ENCODE measurements at regions of chr3 and their contacts with region 1.

Region 1: GRCh38 chr3:188554404-188554803 is 400.4 kb downstream of the LPP start:
- DNase-seq: no peak
- ATAC-seq: peak in 1 of 3 donors; percentile 13
- H3K4me3 ChIP-seq: no peak overlapping the region
- H3K4me3 Mint-ChIP-seq: no peak overlapping the region
- H3K27ac ChIP-seq: peak overlapping the region; percentile 79
- H3K27ac Mint-ChIP-seq: no peak overlapping the region
- H3K4me1 ChIP-seq: peaks cover 23% of the 10 kb centered on the region
- H3K4me1 Mint-ChIP-seq: peaks cover 0 to 26% of the 10 kb centered on the region in 2 donors
- H3K27me3 ChIP-seq: no peaks in the 10 kb centered on the region
- H3K27me3 Mint-ChIP-seq: no peaks in the 10 kb centered on the region
- CTCF ChIP-seq: no peak

Region 2: DNA sequence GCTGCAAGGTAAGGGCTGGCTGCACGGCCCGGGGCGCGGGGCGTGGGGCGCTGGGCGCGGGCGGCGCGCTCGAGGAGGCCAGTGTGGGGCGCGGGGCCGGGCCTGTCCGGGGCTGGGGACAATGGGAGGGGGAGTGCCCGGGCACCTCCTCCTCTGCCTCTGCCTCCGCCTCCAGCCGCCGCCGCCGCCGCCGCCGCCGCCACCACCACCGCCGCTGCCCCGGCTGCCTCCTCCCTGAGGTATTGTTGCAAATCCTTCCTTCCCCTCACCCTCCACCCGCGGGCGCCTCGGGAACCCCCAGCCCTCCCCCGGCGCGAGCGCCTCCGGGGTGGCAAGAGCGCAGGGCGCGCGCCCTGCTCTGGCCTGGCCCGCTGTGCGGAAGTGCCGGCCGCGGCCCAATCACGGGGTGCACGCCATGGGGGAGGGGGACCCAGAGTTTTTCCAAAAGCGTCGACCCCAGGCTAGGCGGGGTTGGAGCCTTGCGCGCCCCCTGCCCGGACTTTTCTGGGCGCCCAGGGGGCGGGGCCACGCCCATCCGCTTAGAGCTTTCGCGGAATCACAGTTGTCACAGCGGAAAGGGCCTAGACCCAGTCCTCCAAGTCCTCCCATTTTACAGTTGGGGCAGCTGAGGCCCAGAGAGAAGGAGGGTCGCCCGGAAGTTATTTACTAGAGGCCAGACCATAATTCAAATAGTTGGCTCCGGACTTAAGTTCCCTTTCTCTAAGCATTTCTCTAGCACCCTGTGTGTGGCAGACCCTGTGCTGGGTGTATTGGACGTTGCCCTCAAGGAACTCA is 400.2 kb before region 1 on chr3 and contains the start of gene LPP:
- intact Hi-C with region 1: loop called (anchors 5 kb)
- DNase-seq: peak; percentile 89 to 91
- ATAC-seq: peak; percentile 85 to 94 (median 92)
- H3K4me3 ChIP-seq: peak within 1 kb of the TSS; percentile 95
- H3K4me3 Mint-ChIP-seq: peak within 1 kb of the TSS; percentile 96
- H3K27ac ChIP-seq: peak within 1 kb of the TSS; percentile 90
- H3K27ac Mint-ChIP-seq: peak within 1 kb of the TSS; percentile 89 to 95
- H3K4me1 ChIP-seq: peaks cover 34% of the 10 kb centered on the region
- H3K4me1 Mint-ChIP-seq: peaks cover 60 to 65% of the 10 kb centered on the region in 2 donors
- H3K27me3 ChIP-seq: no peaks in the 10 kb centered on the region
- H3K27me3 Mint-ChIP-seq: no peaks in the 10 kb centered on the region
- CTCF ChIP-seq: no peak
- total RNA-seq, gene LPP: 137 to 163 (median 149) TPM

Region 3: GRCh38 chr3:188339410-188340295 is 214.8 kb before region 1 on chr3:
- intact Hi-C with region 1: loop called (anchors 1 kb)
- DNase-seq: peak; percentile 37 to 69
- ATAC-seq: peak; percentile 83 to 93 (median 91)
- H3K4me3 ChIP-seq: no peak overlapping the region
- H3K4me3 Mint-ChIP-seq: peak overlapping the region; percentile 79
- H3K27ac ChIP-seq: peak overlapping the region; percentile 62
- H3K27ac Mint-ChIP-seq: peak overlapping the region; percentile 82
- H3K4me1 ChIP-seq: peaks cover 7% of the 10 kb centered on the region
- H3K4me1 Mint-ChIP-seq: peaks cover 44 to 55% of the 10 kb centered on the region in 2 donors
- H3K27me3 ChIP-seq: no peaks in the 10 kb centered on the region
- H3K27me3 Mint-ChIP-seq: peaks cover 0 to 9% of the 10 kb centered on the region in 2 donors
- CTCF ChIP-seq: no peak

Region 4: GRCh38 chr3:188439080-188439479 is 115.3 kb before region 1 on chr3:
- intact Hi-C with region 1: loop called (anchors 1 kb)
- DNase-seq: peak in 1 of 2 donors; percentile 67
- ATAC-seq: peak; percentile 80 to 87 (median 80)
- H3K4me3 ChIP-seq: no peak overlapping the region
- H3K4me3 Mint-ChIP-seq: peak overlapping the region; percentile 71
- H3K27ac ChIP-seq: peak overlapping the region; percentile 90
- H3K27ac Mint-ChIP-seq: peak overlapping the region; percentile 92 to 95
- H3K4me1 ChIP-seq: peaks cover 22% of the 10 kb centered on the region
- H3K4me1 Mint-ChIP-seq: peaks cover 58 to 62% of the 10 kb centered on the region in 2 donors
- H3K27me3 ChIP-seq: no peaks in the 10 kb centered on the region
- H3K27me3 Mint-ChIP-seq: no peaks in the 10 kb centered on the region
- CTCF ChIP-seq: no peak

Region 5: GRCh38 chr3:188584162-188584529 is 29.7 kb after region 1 on chr3:
- intact Hi-C with region 1: no loop called
- DNase-seq: no peak
- ATAC-seq: peak in 1 of 3 donors; percentile 52
- H3K4me3 ChIP-seq: no peak overlapping the region
- H3K4me3 Mint-ChIP-seq: no peak overlapping the region
- H3K27ac ChIP-seq: no peak overlapping the region
- H3K27ac Mint-ChIP-seq: peak overlapping the region in 1 of 2 donors; percentile 58
- H3K4me1 ChIP-seq: peaks cover 4% of the 10 kb centered on the region
- H3K4me1 Mint-ChIP-seq: peaks cover 10 to 20% of the 10 kb centered on the region in 2 donors
- H3K27me3 ChIP-seq: no peaks in the 10 kb centered on the region
- H3K27me3 Mint-ChIP-seq: no peaks in the 10 kb centered on the region
- CTCF ChIP-seq: no peak

Measured in natural killer cell (primary cell).